Breast epithelium (tissue), 4 donors: ENCODE measurements at regions of chr15 and their contacts with region 1.

Region 1: DNA sequence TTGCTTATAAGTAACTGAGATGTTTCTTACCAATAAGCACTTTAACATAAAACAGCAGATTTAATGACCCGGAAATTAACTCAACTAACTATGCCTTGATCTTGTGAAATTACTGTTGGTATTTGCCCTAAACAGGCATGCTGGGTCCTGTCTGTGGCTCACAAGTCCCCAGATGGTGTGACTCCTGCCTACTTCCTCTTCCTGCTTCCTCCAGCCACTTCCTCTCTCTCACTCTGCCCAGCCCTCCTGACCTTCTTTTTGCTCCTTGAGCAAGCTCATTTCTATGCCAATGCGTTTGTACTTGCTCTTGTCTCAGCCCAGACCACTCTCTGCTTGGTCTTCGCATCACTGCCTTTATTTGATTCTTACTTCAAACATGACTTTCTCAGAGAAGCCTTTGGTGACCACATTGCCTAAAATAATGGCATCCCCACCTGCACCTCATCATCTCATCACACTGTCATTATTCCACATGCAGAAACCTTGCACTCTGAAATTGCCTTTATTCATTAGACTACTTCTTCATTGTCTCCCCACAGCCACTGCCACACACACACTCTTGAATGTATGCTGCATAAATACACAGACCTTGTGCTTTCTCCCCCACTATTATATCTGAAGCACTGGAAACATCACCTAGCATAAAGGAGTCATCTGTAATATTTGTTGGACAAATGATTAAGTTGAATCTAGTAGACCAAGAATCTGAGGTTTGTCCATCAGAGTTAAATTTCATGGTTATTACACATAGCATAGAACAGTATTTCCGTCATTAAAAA is 256.3 kb upstream of the SEMA6D start:
- DNase-seq: no peak
- H3K4me3 ChIP-seq: no peak overlapping the region
- H3K27ac ChIP-seq: no peak overlapping the region
- H3K4me1 ChIP-seq: no peaks in the 10 kb centered on the region
- H3K27me3 ChIP-seq: no peaks in the 10 kb centered on the region
- CTCF ChIP-seq: no peak
- POLR2A ChIP-seq: no peak

Region 2: DNA sequence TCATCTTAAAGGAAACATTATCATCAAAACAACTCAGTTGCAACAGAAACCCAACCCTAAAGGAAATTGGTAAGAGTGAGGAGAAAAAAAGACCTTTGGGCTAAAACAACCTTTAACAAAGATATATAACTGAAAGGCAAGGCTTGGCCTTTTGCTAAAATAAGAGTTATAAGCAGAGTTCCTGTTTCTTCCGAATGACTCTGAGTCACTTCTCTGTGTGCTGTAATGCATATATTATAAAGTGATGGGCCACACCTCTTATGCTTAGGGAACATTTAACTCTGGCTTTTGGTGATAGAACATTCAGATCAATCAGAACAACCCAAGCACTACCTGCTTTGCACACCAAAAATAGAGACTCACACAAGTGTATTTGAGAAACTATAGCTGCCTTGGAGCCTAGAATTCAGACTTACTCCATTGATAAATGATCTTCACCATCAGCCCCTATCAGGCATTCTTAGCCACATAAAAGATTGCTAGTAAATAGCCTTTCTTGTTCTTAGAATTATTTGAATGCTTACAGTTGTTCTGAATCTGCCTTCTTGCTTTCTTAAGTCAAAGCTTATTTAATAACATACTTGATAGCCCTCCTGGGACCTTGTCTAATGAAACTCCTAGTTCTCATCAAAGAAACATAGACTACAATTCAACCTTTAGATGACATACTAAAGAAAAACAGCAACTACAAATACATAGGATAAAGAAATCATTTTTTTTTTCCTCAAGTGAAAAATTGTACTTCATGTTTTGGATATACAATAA is 37.9 kb before region 1 on chr15:
- intact Hi-C with region 1: no loop called
- DNase-seq: no peak
- H3K4me3 ChIP-seq: no peak overlapping the region
- H3K27ac ChIP-seq: no peak overlapping the region
- H3K4me1 ChIP-seq: no peaks in the 10 kb centered on the region
- H3K27me3 ChIP-seq: no peaks in the 10 kb centered on the region
- CTCF ChIP-seq: no peak
- POLR2A ChIP-seq: no peak

Region 3: GRCh38 chr15:47443839-47444238 is 17.1 kb before region 1 on chr15:
- intact Hi-C with region 1: loop called (anchors 1 kb)
- DNase-seq: no peak
- H3K4me3 ChIP-seq: no peak overlapping the region
- H3K27ac ChIP-seq: no peak overlapping the region
- H3K4me1 ChIP-seq: no peaks in the 10 kb centered on the region
- H3K27me3 ChIP-seq: no peaks in the 10 kb centered on the region
- CTCF ChIP-seq: no peak
- POLR2A ChIP-seq: no peak